ENCODE measurements at regions of chr5 and their contacts with region 1.

Region 1: DNA sequence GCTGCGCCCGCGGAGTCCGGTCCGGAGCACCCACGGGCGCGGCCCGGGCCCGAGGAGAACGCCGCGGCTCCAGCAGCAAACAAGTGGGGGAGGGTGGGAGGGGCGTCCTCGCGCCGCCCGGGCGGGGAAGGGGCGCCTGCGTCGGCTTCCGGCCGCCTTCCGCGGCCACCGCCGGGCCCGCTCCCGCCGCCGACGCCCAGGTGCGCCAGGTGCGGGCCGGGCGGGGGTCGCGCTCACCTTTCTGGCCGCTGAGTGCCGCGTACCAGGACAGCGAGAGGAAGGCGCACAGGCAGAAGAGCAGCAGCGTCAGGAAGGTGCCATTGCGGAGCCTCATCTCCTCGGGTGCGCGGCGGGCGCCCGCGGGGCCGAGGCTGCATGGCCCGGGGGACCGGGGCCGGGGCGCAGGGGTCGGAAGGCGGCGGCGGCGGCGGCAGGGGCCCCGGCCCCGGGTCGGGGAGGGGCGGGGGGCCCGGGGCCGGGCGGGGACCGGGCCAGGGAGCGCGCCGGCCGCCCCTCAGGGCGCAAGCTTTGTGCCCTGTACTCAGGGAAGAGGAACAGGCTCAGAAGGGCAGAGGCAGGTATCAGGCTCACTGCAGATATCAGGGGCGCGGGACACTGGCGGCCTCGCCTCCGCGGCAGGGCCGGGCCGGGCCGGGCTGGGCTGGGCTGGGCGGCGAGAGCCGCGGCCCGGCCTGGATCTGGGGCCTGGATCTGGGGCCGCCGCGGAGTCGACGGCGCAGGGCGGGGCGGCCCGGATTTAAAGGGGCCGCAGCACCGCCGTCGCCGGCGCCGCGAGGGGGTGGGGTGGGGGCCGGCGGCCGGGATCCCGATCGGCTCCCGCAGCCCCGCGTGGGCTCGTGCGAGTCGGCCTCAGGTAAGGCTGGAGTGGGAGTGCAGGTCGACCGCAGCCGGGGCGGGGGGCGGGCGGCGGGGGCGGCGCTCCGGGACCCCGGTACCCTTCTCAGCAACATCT is at the start of gene MGAT4B:
- DNase-seq: peak; percentile 67
- H3K4me3 Mint-ChIP-seq: peak within 1 kb of the TSS; percentile 86
- H3K27ac Mint-ChIP-seq: peak within 1 kb of the TSS; percentile 81
- H3K4me1 Mint-ChIP-seq: peaks cover 32% of the 10 kb centered on the region
- H3K27me3 Mint-ChIP-seq: no peaks in the 10 kb centered on the region
- total RNA-seq, gene MGAT4B: 124 and 132 TPM in 2 replicates

Region 2: DNA sequence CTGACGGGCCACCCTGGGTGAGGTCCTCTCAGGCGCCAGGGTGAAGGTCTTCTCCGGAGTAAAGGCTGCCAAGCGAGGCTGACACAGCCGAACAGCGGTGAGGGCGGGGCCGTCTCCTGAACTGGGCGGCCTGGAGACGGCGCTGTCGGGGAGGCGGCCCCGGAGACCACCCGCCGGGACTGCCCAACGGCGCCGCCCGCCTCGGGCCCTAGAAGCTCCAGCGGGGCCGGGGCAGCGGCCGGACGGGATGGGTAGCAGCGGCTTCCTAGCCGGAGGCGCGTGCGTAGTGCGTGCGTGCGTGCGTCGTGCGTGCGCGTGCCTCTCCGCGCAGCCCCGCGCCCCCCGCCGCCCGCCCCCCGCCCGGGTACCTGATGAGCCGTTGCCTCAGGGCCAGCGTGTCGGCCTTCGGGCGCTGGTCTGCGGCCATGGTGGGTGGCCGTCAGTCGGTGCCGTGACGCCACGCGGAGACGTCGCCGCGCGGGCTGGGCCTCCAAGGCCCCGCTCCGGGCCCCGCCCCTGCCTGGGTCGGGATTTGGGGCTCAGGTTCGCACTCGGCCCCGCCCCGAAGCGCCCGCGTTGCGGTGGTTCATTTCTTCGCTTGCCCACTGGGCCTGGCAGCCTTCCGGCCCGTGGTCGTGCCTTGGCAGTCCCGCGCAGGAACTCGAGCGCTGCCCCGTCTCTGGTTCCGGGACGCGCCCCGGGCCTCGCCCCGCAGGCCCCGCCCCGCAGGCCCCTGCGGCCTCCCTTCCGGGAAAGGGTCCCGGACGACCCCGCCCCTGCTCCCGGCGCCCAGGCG is 1574.2 kb before region 1 on chr5 and contains the start of gene PHYKPL:
- intact Hi-C with region 1: loop called (anchors 10 kb)
- DNase-seq: peak; percentile 75
- H3K4me3 Mint-ChIP-seq: peak within 1 kb of the TSS; percentile 90
- H3K27ac Mint-ChIP-seq: peak within 1 kb of the TSS; percentile 86
- H3K4me1 Mint-ChIP-seq: peaks cover 66% of the 10 kb centered on the region
- H3K27me3 Mint-ChIP-seq: no peaks in the 10 kb centered on the region
- total RNA-seq, gene PHYKPL: 84.4 and 86.7 TPM in 2 replicates

Region 3: DNA sequence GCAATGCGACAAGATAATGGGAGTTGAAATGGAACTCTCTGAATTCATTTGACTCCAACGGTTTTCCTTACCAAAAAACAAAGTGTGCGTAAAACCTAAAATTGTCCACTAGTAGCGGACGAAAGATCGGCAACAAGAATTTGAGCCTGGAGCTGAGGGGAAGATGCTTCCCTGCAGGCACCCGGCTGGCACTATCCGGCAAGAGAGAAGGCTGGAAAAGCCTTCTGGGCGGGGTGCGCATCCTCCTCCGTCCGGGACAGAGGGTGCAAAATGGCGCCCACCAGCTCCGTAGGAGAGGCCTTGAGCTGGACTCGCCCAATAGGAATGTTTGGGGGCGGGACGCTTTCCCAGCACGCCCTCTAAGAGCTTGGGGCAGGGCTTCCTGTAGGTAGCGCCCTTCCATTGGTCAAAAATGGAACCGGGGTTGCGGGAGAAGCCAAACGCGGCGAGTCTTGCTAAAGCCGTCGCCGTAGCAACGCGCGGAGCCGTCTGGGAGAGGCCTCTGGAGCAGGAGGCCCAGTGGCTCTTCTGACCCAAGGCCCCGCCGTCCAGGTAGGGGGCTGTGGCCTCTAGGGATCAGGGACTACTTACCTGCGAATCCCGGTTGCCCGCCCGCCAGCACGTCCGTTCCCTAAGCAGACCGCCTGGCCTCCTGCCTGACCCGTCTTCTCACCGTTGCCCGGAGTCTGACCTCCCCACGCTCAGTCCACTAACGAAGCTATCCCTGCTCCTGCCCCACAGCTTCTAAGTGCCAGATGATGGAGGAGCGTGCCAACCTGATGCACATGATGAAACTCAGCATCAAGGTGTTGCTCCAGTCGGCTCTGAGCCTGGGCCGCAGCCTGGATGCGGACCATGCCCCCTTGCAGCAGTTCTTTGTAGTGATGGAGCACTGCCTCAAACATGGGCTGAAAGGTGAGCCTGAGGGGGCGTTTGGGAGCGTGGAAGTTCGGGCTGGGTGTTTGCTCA is 247.0 kb before region 1 on chr5:
- intact Hi-C with region 1: loop called (anchors 5 kb)
- DNase-seq: peak; percentile 93
- H3K4me3 Mint-ChIP-seq: peak overlapping the region; percentile 94
- H3K27ac Mint-ChIP-seq: peak overlapping the region; percentile 86
- H3K4me1 Mint-ChIP-seq: peaks cover 10% of the 10 kb centered on the region
- H3K27me3 Mint-ChIP-seq: no peaks in the 10 kb centered on the region

Region 4: DNA sequence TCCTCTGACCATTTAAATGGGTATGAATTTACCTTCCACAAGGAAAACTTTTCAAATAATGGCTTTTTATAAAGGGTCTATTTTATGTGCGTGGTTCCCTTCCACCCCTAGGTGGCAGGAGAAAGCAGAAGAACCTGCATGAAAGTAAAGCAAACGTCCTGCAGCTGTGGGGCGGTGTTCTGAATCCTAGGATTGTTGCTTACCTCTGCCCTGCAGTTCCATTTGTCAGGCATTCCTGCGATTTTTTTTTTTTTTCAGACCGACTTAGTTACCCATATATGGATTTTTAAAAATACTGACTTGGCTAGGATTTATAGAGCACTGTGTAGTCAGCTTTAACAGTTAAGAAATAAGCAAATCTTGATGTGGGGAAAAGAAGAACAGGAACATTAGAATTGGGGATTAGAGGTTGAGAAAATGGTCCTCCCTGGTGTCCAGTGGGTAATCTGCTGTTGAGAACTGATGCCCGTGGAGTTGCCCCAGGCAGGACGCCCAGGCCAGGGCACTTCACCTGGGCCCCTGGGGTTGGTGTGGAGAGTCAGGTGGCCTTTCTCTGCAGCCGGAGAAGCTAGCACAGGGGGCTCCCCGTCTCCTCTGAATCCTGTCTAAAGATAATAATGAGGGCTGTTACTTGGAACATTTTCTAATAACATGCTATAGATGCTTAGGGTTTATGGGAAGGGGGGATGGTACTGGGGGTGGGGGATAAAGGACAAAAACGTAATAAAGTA is 43.2 kb before region 1 on chr5:
- intact Hi-C with region 1: no loop called
- DNase-seq: peak; percentile 11
- H3K4me3 Mint-ChIP-seq: no peak overlapping the region
- H3K27ac Mint-ChIP-seq: no peak overlapping the region
- H3K4me1 Mint-ChIP-seq: peaks cover 51% of the 10 kb centered on the region
- H3K27me3 Mint-ChIP-seq: no peaks in the 10 kb centered on the region

Region 5: DNA sequence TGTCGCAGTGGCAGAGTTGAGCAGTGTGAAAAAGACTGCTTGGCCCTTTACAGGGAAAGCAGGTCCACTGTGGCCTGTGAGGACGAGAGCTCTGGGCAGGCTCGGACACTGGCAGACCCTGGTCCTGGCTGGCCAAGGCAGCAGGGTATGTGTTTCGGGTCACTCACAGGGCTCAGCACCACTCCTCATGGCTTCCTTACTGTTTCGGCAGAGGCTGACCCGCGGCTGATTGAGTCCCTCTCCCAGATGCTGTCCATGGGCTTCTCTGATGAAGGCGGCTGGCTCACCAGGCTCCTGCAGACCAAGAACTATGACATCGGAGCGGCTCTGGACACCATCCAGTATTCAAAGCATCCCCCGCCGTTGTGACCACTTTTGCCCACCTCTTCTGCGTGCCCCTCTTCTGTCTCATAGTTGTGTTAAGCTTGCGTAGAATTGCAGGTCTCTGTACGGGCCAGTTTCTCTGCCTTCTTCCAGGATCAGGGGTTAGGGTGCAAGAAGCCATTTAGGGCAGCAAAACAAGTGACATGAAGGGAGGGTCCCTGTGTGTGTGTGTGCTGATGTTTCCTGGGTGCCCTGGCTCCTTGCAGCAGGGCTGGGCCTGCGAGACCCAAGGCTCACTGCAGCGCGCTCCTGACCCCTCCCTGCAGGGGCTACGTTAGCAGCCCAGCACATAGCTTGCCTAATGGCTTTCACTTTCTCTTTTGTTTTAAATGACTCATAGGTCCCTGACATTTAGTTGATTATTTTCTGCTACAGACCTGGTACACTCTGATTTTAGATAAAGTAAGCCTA is 29.9 kb after region 1 on chr5:
- intact Hi-C with region 1: loop called (anchors 1 kb)
- DNase-seq: peak; percentile 52
- H3K4me3 Mint-ChIP-seq: peak overlapping the region; percentile 48
- H3K27ac Mint-ChIP-seq: peak overlapping the region; percentile 77
- H3K4me1 Mint-ChIP-seq: peaks cover 16% of the 10 kb centered on the region
- H3K27me3 Mint-ChIP-seq: no peaks in the 10 kb centered on the region

Region 6: DNA sequence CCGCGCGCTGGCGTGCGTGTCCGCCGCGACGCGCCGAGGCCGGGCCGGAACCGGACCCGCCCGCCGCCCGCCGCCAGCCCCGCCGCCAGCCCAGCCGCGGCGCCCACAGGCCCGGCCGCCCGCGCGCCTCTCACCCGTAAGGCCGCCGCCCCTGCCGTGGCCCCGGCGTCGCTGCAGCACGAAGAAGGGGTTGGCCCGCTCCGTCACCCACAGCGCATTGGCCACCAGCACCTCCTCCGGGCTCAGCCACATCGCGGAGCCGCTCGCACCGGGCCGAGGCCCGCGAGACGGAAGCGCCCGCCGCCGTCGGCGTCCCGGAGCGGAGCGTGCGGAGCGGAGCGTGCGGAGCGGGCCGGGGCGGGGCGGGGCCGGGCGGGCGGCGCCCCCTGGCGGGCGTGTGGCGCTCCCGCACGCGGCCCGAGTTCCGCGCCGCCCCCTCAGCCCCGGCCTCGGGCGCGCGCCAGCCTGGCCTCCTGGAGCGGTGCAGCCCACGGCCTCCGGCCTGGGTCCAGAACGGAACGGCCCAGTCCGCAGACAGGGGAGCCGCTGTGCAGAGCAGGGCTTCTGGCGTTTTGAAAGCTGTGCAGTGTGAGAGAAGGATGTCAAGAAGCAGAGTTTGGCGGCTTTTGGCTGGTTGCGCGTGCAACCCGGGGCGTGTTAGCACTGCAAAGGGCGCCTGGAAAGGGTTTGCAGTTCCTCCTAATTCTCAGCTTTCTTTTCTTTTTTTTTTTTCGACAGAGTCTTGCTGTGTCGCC is 101.2 kb after region 1 on chr5 and contains the start of gene TBC1D9B:
- intact Hi-C with region 1: loop called (anchors 2 kb)
- DNase-seq: peak; percentile 69
- H3K4me3 Mint-ChIP-seq: peak within 1 kb of the TSS; percentile 95
- H3K27ac Mint-ChIP-seq: peak within 1 kb of the TSS; percentile 89
- H3K4me1 Mint-ChIP-seq: peaks cover 18% of the 10 kb centered on the region
- H3K27me3 Mint-ChIP-seq: peaks cover 2% of the 10 kb centered on the region
- total RNA-seq, gene TBC1D9B: 123 and 127 TPM in 2 replicates

Region 7: DNA sequence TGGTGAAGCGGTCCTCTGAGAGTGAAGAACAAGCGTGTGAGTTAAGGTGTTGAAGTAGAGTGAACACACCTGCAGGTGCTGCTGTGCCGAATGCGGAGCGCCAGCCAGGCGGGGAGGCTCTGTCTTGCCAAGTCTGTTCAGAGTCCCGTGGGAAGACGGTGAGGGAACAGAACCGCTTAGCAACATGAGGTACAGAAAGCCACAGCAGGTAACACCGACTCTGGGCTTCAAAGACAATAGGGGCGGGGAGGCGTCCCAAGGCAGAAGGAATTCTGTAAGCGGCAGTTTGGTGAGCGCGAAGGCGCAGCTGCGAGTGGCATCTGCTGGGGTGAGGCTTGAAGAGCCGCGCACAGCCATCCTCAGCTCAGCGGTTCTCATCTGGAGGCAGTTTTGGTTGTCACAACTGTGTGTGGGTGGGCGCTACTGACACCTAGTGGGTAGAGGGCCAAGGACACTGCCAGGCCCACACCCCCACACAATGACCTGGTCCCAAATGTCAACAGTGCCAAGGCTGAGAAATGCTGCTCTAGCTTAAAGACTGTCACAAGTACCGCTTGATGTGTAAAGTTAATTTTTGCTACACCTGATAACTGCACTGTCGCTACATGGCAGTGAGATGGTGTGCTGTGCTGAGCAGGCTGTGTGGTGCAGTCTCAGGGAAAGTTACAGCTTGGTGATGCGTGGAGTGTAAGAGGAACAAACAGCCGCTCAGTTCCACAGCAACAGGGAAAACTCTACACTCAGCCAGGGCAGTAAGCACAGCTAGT is 168.6 kb after region 1 on chr5:
- intact Hi-C with region 1: loop called (anchors 10 kb)
- DNase-seq: no peak
- H3K4me3 Mint-ChIP-seq: no peak overlapping the region
- H3K27ac Mint-ChIP-seq: no peak overlapping the region
- H3K4me1 Mint-ChIP-seq: peaks cover 9% of the 10 kb centered on the region
- H3K27me3 Mint-ChIP-seq: no peaks in the 10 kb centered on the region

Region 8: DNA sequence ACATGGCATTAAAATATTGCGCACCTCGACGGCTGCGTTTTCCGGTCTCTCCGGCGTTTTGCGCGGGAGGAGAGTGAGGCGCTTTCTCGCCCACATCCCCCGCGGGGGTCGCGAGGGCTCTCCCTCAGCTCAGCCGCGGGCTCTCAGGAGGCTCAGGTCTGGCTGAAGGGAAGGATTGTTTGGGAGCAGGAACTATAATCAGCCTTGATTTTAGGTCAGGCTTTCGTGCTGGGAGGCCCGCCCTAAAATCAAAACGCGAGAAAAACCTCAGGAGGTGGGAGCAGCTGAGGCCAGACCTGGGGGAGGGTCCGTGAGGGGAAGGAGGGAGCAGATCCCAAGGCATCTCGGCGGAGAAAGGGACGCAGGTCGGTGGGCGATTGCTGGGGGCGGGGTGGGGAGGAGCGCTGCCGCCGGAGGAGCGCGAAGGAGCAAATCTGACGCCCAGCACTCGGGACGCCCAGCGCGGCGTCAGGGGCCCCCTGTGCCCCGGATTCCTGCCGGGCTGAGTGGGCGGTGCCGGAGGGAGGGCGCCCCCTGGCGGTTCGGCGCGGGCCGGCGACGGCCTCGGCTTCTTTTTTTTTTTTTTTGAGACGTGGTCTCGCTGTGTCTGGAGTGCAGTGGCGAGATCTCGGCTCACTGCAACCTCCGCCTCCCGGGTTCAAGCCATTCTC is 283.7 kb after region 1 on chr5:
- intact Hi-C with region 1: loop called (anchors 2 kb)
- DNase-seq: peak; percentile 61
- H3K4me3 Mint-ChIP-seq: peak overlapping the region; percentile 79
- H3K27ac Mint-ChIP-seq: no peak overlapping the region
- H3K4me1 Mint-ChIP-seq: peaks cover 4% of the 10 kb centered on the region
- H3K27me3 Mint-ChIP-seq: peaks cover 12% of the 10 kb centered on the region